CD8-positive, alpha-beta T cell (primary cell): ENCODE measurements at regions of chr14 and their contacts with region 1.

Region 1: GRCh38 chr14:76876076-76876475 is 49.9 kb downstream of the LRRC74A start:
- DNase-seq: peak in 8 of 9 experiments; percentile 24 to 68 (median 51)
- ATAC-seq: peak; percentile 69
- H3K4me3 ChIP-seq: no peak overlapping the region
- H3K4me3 Mint-ChIP-seq: no peak overlapping the region
- H3K27ac ChIP-seq: no peak overlapping the region
- H3K27ac Mint-ChIP-seq: no peak overlapping the region
- H3K4me1 ChIP-seq: no peaks in the 10 kb centered on the region
- H3K4me1 Mint-ChIP-seq: no peaks in the 10 kb centered on the region
- H3K27me3 ChIP-seq: no peaks in the 10 kb centered on the region
- H3K27me3 Mint-ChIP-seq: no peaks in the 10 kb centered on the region
- CTCF ChIP-seq: peak; percentile 76

Region 2: GRCh38 chr14:76904740-76905438 is 28.8 kb after region 1 on chr14:
- CTCF ChIA-PET with region 1: interaction called, 11 read pairs
- POLR2A ChIA-PET with region 1: no interaction called
- intact Hi-C with region 1: no loop called
- DNase-seq: peak; percentile 38 to 85 (median 77)
- ATAC-seq: peak; percentile 84
- H3K4me3 ChIP-seq: peak overlapping the region in 1 of 2 experiments; percentile 3
- H3K4me3 Mint-ChIP-seq: peak overlapping the region; percentile 61
- H3K27ac ChIP-seq: no peak overlapping the region
- H3K27ac Mint-ChIP-seq: peak overlapping the region; percentile 68
- H3K4me1 ChIP-seq: peaks cover 28% of the 10 kb centered on the region
- H3K4me1 Mint-ChIP-seq: peaks cover 23% of the 10 kb centered on the region
- H3K27me3 ChIP-seq: no peaks in the 10 kb centered on the region
- H3K27me3 Mint-ChIP-seq: no peaks in the 10 kb centered on the region
- CTCF ChIP-seq: no peak

Region 3: DNA sequence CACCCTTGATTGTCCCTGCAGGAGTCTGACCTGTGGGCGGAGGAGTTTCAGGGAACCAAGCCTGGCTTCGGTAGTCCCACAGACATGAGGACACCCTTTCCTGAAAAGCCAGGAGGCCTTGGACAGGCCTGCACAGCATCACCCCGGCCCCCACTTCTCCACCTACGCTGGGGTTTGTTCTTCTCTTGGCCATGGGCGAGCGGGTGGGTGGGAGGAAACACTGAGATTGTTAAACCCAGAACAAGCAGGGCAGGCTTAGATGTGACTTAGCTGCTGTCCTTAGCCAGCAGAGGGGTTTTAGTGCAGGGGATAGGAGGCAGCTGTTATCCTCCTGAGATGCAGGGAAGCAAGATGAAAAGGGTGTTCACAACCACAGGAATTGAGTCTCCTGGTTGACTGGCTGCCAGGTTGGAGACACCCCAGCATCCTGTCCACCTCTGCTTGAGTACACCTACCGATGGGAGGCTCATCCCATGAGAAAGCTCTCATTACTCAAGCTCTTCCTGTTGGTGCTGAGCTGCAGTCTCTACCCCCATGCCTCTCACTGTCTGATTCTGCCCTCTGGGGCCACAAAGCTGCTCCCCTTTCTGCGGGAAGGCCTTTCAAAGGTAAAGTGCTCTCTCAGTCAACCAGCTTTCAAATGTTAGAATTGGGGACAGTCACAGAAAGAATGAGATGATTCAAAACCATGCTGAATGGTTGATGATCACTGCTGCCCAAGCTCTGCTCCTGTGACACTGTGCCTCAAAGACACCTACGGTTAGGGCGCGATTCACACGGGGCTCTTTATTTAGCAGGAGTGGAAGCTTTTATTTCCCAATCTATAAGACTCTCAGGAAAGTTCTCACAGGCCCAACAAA is 66.1 kb after region 1 on chr14:
- CTCF ChIA-PET with region 1: interaction called, 11 read pairs
- POLR2A ChIA-PET with region 1: no interaction called
- intact Hi-C with region 1: no loop called
- DNase-seq: no peak
- ATAC-seq: no peak
- H3K4me3 ChIP-seq: no peak overlapping the region
- H3K4me3 Mint-ChIP-seq: no peak overlapping the region
- H3K27ac ChIP-seq: no peak overlapping the region
- H3K27ac Mint-ChIP-seq: no peak overlapping the region
- H3K4me1 ChIP-seq: peaks cover 6% of the 10 kb centered on the region
- H3K4me1 Mint-ChIP-seq: peaks cover 11% of the 10 kb centered on the region
- H3K27me3 ChIP-seq: no peaks in the 10 kb centered on the region
- H3K27me3 Mint-ChIP-seq: no peaks in the 10 kb centered on the region
- CTCF ChIP-seq: no peak

Region 4: DNA sequence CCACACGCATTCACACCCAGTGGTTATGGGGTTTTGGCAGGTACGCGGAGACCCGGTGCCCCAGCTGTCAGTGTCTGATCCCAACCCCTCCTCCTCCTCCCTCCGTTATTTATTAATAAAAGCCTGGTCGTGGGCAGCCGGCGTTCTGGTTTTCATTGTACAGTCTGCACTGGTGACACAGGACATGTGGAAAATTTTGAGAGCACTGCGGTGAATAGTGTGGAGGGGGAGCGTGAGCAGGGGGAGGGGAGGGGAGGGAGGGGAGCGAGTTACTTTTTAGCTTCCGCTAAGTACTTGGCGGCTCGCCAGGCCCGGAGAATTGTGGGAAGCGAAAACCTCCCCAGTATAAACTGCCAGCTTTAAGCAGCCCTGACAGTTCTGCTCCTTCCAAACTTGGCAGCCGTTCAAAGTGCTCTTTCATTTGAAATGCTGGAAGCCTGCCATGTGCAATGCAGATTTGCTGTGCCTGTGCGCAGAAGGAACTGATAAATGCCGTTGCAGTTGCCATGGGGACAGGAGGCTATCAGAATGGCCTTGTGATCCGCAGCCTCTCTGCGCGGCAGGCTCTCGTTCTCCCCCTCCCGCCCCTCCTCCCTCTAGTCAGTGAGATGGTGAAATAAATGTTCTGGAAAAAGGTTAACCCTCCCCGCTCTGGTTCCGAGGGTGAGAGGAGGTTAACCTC is 164.1 kb after region 1 on chr14:
- CTCF ChIA-PET with region 1: interaction called, 13 read pairs
- POLR2A ChIA-PET with region 1: interaction called, 3 read pairs
- intact Hi-C with region 1: no loop called
- DNase-seq: peak; percentile 94 to 100 (median 99)
- ATAC-seq: peak; percentile 77
- H3K4me3 ChIP-seq: peak overlapping the region; percentile 42 to 47
- H3K4me3 Mint-ChIP-seq: peak overlapping the region; percentile 86
- H3K27ac ChIP-seq: peak overlapping the region; percentile 90 to 94
- H3K27ac Mint-ChIP-seq: peak overlapping the region; percentile 99
- H3K4me1 ChIP-seq: peaks cover 74% of the 10 kb centered on the region
- H3K4me1 Mint-ChIP-seq: peaks cover 90% of the 10 kb centered on the region
- H3K27me3 ChIP-seq: no peaks in the 10 kb centered on the region
- H3K27me3 Mint-ChIP-seq: no peaks in the 10 kb centered on the region
- CTCF ChIP-seq: no peak

Region 5: DNA sequence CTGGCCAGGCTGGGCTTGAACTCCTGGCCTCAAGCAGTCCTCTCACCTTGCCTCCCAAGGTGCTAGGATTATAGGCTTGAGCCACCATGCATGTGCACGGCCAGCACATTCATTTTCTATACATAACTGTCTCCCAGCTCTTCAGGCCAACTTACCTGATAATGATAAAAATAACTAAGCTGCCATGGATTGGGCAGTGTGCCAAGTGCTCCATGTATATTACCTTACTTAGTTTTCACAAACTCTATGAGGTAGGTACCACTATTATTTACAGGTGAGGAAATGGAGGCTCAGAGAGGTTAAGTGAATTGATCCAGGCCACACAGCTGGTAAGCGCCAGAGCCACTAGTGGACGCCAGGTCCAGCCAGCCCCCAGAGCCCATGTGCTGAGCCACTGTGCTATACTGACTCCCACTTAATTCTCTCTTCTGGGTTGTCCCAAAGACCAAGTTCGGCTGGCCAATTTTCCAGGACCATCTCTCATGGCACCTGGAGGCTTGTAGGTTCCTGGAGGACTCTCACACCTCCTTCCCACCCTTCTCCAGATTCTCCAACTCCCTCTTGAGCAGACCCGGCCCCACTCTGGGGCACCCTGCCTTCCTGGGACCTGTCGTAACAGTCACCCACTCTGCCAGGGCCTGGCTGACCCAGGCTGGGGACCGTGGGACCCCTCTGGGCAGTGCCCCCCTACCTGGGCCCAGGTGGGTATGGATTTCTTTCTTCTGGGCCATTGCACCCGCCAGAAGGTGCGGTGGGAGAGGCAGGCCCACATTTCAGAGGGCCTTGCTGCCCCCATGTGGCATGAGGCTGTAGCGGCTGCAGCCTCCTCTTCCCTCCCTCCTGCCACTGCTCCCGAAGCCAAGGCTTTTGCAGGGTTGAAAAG is 191.8 kb after region 1 on chr14:
- CTCF ChIA-PET with region 1: interaction called, 499 read pairs
- POLR2A ChIA-PET with region 1: no interaction called
- intact Hi-C with region 1: loop called (anchors 1 kb)
- DNase-seq: peak; percentile 18 to 68 (median 55)
- ATAC-seq: peak; percentile 59
- H3K4me3 ChIP-seq: no peak overlapping the region
- H3K4me3 Mint-ChIP-seq: no peak overlapping the region
- H3K27ac ChIP-seq: no peak overlapping the region
- H3K27ac Mint-ChIP-seq: no peak overlapping the region
- H3K4me1 ChIP-seq: no peaks in the 10 kb centered on the region
- H3K4me1 Mint-ChIP-seq: peaks cover 2% of the 10 kb centered on the region
- H3K27me3 ChIP-seq: no peaks in the 10 kb centered on the region
- H3K27me3 Mint-ChIP-seq: peaks cover 5% of the 10 kb centered on the region
- CTCF ChIP-seq: peak; percentile 65

Region 6: GRCh38 chr14:77124345-77125280 is 248.5 kb after region 1 on chr14:
- CTCF ChIA-PET with region 1: interaction called, 7 read pairs
- POLR2A ChIA-PET with region 1: no interaction called
- intact Hi-C with region 1: loop called in 1 of 2 experiments (anchors 1 kb)
- DNase-seq: peak; percentile 25 to 85 (median 63)
- ATAC-seq: peak; percentile 79
- H3K4me3 ChIP-seq: peak overlapping the region; percentile 57 to 63
- H3K4me3 Mint-ChIP-seq: peak overlapping the region; percentile 81
- H3K27ac ChIP-seq: no peak overlapping the region
- H3K27ac Mint-ChIP-seq: peak overlapping the region; percentile 80
- H3K4me1 ChIP-seq: peaks cover 23% of the 10 kb centered on the region
- H3K4me1 Mint-ChIP-seq: peaks cover 47% of the 10 kb centered on the region
- H3K27me3 ChIP-seq: peaks cover 0 to 8% of the 10 kb centered on the region in 2 experiments
- H3K27me3 Mint-ChIP-seq: peaks cover 30% of the 10 kb centered on the region
- CTCF ChIP-seq: peak; percentile 63